ENCODE measurements at regions of chr7 and their contacts with region 1.

Region 1: DNA sequence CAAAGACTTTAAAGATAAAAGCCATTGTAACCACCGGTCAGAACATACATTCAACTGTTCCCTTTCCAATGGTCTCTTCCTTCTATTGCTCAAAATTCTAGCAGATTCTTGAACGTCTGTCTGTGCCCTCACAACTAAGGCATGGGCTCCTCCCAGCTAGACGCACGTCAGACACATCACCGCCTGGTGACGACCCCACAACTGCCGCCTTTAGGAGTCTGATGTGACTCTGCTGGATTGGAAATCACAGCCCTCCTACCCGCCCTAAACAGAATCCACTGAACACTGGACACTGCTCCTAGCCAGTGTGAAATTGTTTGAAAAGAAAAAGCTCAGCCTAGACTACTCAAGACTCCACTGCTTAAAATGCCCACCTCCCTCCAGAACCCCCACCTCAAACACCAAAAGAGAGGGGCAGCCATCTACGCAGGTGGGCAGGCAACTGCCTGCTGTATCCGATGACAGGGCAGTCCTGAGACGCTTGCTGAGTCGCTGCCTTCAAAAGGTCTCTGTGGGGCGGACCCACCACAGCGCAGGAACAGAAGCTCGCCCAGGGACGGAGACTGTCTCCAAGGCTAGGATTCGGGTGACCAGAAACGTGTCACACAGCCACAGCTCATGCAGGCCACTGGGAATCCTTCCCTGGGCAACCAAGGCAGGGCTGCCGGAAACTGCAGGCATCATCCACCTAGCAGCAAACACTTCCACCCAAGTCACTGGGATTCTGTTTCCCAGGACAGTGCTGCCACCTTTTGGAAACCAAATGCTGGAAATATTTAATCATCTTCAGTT is 34.7 kb downstream of the GSDME start:
- DNase-seq: no peak
- H3K4me3 ChIP-seq: no peak overlapping the region
- CTCF ChIP-seq: peak; percentile 45

Region 2: DNA sequence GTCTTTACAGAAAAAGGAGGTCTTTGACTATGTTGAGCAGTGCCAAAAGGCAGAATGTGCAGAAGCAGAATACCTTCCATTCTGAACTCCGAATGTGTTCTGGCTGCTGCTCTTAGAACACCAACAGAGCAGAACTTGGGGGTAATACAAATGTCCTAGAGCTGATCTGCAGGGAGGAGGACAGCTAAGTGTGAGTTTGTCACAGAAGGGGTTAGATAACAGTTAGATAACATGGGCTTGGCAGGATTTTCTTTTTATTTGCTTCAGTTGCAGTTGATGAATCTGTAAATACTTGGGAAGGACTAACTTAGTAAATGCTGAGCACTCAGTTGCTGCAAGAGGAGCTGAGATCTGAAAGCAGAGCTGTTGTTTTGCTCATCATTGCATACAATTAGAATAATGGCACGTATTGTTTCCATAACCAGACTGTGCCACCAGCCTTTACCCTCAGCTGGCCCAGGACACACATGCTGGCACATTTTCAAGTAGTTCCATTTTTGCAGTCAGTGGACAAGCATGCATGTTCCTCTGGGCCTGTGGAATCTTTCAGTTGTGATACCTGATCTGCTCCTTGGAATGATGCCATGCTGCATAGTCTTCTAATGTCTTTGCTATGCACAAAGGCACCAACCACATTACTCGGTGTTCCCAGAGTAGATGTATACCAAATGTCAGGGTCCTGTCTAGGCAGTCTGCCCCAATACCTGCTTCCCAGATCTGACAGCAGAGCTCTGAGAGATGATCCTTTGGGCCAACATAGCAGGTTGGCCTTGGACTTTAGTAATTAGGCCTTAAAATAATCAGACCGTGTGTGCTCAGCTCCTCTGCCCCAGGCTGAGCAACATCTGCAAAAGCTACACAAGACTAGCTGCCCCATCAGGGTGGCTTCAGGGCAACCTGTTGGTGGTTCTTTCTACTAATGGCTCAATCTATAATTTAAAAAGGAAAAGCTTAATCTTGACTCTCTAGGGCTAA is 21.0 kb before region 1 on chr7:
- CTCF ChIA-PET with region 1: interaction called, 27 read pairs
- POLR2A ChIA-PET with region 1: no interaction called
- DNase-seq: peak; percentile 86
- H3K4me3 ChIP-seq: no peak overlapping the region
- CTCF ChIP-seq: no peak

Region 3: DNA sequence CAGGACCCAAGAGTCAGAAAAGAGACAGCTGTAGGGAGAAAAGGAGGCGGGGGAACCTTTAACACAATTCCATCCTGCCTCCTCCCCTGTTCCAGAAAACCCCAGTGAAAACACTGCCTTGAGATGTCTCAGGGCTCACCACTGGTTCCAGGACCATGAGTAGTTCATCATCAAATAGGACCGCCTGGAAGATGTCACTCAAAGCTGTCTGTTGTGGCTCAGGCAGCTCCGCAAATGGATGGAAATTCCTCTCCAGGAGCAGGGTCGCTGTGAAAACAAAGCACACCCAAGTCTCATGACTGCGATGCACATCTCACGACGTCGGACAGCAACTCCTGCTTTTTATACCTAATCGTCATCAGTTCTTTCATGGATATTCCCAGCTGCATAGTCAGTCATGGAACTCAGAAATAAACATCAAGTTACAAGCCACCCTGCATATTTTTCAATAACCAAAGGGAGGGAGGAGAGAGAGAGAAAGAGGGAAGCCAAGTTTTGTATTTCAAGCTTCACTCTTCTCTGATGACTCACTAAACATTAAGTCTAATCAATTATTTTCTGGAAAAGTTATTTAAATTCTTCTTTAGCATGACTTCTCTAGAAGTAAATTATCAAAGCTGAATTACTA is 14.5 kb before region 1 on chr7:
- CTCF ChIA-PET with region 1: interaction called, 27 read pairs
- POLR2A ChIA-PET with region 1: no interaction called
- DNase-seq: no peak
- H3K4me3 ChIP-seq: no peak overlapping the region
- CTCF ChIP-seq: no peak

Region 4: GRCh38 chr7:24732646-24733413 is 10.2 kb after region 1 on chr7:
- CTCF ChIA-PET with region 1: interaction called, 19 read pairs
- POLR2A ChIA-PET with region 1: no interaction called
- DNase-seq: no peak
- H3K4me3 ChIP-seq: no peak overlapping the region
- CTCF ChIP-seq: no peak

Region 5: DNA sequence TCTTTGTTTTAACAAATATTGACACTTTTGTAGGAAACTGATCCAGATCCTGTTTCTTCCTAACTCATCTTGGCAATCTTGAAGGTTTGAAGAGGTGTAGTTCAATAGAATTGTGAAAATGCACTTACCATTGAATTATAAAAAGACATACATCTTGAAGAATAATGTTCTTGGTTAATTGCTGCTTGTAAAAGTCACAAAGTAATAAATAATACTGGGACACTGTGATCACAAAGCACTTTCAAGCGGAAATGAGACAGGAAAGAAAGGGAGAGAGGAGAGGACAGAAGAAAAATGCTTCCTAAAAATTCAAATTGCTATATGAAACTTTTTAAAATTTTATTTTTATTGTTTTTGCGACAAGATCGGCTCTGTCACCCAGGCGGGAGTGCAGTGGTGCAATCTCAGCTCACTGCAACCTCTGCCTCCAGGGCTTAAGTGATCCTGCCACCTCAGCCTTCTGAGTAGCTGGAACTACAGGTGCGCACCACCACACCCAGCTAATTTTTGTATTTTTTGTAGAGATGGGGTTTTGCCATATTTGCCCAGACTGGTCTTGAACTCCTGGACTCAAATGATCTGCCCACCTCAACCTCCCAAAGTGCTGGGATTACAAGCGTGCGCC is 1414.4 kb after region 1 on chr7:
- CTCF ChIA-PET with region 1: no interaction called
- POLR2A ChIA-PET with region 1: no interaction called
- DNase-seq: no peak
- H3K4me3 ChIP-seq: no peak overlapping the region
- CTCF ChIP-seq: no peak